K562 (cell line): ENCODE measurements at regions of chr3 and their contacts with region 1.

Region 1: DNA sequence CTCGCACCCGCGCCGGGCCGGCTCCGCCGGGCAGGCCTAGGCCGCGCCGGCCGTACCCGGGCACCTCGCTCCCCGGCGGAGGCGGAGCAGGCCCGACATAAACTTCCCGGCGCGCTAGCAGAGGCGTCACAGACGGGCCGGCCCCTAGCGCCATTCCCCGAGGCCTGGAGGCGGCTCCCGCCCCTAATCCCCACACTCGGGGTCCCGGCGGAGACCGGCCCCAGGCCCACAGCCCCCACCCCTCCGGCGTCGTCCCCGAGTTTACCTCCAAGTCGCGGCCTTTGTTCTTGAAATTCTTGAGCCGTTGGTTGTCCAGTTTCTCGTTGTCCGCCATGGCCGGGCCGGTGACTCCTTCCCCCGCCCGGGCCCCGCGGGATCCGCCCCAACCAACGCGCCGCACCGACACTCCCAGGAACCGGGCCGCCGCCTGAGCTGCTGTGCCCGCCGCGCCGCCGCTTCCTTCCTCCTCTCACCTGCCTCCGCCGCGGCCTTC is 376 bp downstream of the KPNA4 start:
- DNase-seq: peak in 3 of 4 experiments; percentile 58 to 71 (median 62)
- ATAC-seq: peak; percentile 79
- H3K4me3 ChIP-seq: peak overlapping the region; percentile 67
- H3K27ac ChIP-seq: peak overlapping the region; percentile 85
- H3K4me1 ChIP-seq: peaks cover 13 to 17% of the 10 kb centered on the region in 2 experiments; a peak in 4 of 5 replicates
- H3K27me3 ChIP-seq: no peaks in the 10 kb centered on the region
- CTCF ChIP-seq: no peak
- EP300 ChIP-seq: no peak
- POLR2A ChIP-seq: no peak
- RAD21 ChIP-seq: no peak

Region 2: DNA sequence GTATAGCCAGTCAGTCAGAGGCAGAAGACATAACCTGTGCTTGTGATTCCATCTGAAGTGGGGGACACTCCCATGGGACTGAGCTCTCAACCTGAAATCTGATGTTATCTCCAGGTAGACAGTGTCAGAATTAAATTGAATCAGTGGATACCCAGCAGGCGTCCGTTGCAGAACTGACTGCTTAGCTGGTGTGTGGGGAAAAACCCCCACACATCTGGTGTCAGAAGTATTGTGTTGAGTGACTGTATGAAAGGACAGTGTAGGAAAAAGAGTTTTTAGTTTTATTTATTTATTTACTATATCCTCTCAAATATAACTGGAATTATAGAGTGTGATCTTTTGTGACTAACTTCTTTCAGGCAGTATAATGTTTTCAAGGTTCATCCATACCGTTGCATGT is 10.0 kb before region 1 on chr3:
- CTCF ChIA-PET with region 1: no interaction called
- POLR2A ChIA-PET with region 1: interaction called, 10 read pairs
- in situ Hi-C with region 1: no loop called
- intact Hi-C with region 1: no loop called
- DNase-seq: no peak
- ATAC-seq: peak; percentile 33; the same call in 2 of the 3 replicates
- H3K4me3 ChIP-seq: no peak overlapping the region
- H3K27ac ChIP-seq: no peak overlapping the region
- H3K4me1 ChIP-seq: no peaks in the 10 kb centered on the region
- H3K27me3 ChIP-seq: no peaks in the 10 kb centered on the region
- CTCF ChIP-seq: no peak
- EP300 ChIP-seq: no peak
- POLR2A ChIP-seq: no peak
- RAD21 ChIP-seq: no peak